Activated CD4-positive, alpha-beta memory T cell treated with anti-CD3 and anti-CD28 coated beads for 36 hours (primary cell): ENCODE measurements at regions of chr16 and their contacts with region 1.

Region 1: GRCh38 chr16:28494121-28494851 is at the start of gene APOBR:
- DNase-seq: peak; percentile 94
- H3K4me3 Mint-ChIP-seq: peak within 1 kb of the TSS; percentile 75
- H3K27ac Mint-ChIP-seq: peak within 1 kb of the TSS; percentile 100
- H3K4me1 Mint-ChIP-seq: peaks cover 53% of the 10 kb centered on the region
- H3K27me3 Mint-ChIP-seq: no peaks in the 10 kb centered on the region
- total RNA-seq, gene APOBR: 2.9 to 3.1 TPM

Region 2: DNA sequence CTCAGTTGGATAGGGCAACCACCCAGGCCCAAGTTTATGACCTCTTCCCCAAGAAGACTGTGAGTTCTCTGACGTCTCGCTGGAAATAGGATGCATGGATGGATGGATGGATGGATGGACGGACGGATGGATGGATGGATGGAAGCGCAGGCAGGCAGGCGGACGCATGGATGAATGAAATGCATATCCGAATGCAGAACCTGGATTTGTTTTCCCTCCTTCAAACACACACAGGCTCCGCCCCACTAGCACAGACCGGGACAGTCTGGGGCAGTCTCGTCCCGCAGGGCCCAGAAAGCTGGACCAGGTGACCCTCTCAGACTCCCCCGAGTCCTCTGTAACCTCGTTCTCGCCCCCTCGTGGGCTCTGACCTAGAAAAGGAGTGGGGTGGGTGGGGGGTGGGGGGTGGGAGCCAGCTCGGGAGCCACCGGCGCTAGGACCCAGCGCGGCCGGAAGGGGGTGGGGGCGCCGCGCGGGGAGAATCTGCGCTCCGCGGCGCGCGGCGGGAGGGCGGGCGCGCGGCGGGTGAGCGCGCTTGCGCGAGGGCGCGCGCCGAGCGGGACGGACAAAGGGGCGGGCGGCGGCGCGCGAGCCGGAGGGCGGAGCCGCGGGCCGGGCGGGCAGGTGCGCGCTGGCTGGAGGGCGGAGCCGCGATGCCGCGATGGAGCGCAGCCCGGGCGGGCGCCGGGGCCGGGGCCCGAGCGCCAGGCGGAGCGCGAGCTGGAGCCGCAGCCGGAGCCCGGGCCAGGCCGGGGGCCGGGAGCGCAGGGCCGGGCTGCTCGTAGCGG is 202.2 kb before region 1 on chr16 and contains the start of gene SBK1:
- CTCF ChIA-PET with region 1: no interaction called
- POLR2A ChIA-PET with region 1: no interaction called
- intact Hi-C with region 1: no loop called
- DNase-seq: peak; percentile 85
- H3K4me3 Mint-ChIP-seq: peak within 1 kb of the TSS; percentile 82
- H3K27ac Mint-ChIP-seq: peak within 1 kb of the TSS; percentile 82
- H3K4me1 Mint-ChIP-seq: peaks cover 44% of the 10 kb centered on the region
- H3K27me3 Mint-ChIP-seq: no peaks in the 10 kb centered on the region
- total RNA-seq, gene SBK1: 2.9 to 3.8 TPM

Region 3: DNA sequence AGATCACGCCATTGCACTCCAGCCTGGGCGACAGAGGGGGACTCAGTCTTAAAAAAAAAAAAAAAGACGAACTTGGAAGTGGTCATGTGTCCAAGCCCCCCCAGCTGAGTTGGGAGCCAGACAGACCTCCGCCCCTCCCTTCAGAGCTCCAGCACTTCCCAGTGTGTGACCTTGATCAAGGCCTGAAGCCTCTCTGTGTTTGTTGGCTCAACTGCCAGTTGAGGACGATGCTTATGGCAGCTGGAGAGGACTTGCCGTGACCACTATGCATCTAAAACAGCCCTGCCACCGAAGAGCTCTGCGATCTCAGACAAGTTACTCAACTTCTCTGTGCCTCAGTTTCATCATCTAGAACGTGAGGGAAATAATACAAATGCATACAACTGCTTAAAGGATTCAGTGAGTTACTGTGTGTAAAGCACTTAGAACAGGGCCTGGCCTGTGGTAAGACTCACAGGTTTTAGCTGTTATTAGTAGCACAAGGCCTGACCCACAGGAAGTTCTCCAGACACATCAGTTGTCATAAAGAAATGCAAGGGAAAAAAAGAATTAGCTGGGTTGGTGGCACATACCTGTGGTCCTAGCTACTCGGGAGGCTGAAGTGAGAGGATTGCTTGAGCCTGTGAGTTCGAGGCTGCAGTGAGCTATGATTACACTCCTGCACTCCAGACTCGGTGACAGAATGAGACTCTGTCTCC is 19.3 kb after region 1 on chr16:
- CTCF ChIA-PET with region 1: no interaction called
- POLR2A ChIA-PET with region 1: no interaction called
- intact Hi-C with region 1: no loop called
- DNase-seq: no peak
- H3K4me3 Mint-ChIP-seq: no peak overlapping the region
- H3K27ac Mint-ChIP-seq: no peak overlapping the region
- H3K4me1 Mint-ChIP-seq: no peaks in the 10 kb centered on the region
- H3K27me3 Mint-ChIP-seq: no peaks in the 10 kb centered on the region

Region 4: GRCh38 chr16:28553776-28554633 is 59.7 kb after region 1 on chr16 and contains the start of gene SGF29:
- CTCF ChIA-PET with region 1: interaction called, 5 read pairs
- POLR2A ChIA-PET with region 1: interaction called, 3 read pairs
- intact Hi-C with region 1: loop called (anchors 1 kb)
- DNase-seq: peak; percentile 96
- H3K4me3 Mint-ChIP-seq: peak within 1 kb of the TSS; percentile 93
- H3K27ac Mint-ChIP-seq: peak within 1 kb of the TSS; percentile 98
- H3K4me1 Mint-ChIP-seq: peaks cover 28% of the 10 kb centered on the region
- H3K27me3 Mint-ChIP-seq: peaks cover 3% of the 10 kb centered on the region
- total RNA-seq, gene SGF29: 17.8 to 18.5 TPM